Activated T-helper 1 cell treated with anti-CD3 and anti-CD28 coated beads, Interleukin-12 subunit alpha, Interleukin-12 subunit beta, Interleukin-2, Interleukin-4 antibody, amounts not matched to agents 30 ng/mL and 10 ng/mL and 1 ng/mL, durations not matched to agents 14 hours and 24 hours and 36 hours (primary cell): ENCODE measurements at regions of chr6 and their contacts with region 1.

Region 1: DNA sequence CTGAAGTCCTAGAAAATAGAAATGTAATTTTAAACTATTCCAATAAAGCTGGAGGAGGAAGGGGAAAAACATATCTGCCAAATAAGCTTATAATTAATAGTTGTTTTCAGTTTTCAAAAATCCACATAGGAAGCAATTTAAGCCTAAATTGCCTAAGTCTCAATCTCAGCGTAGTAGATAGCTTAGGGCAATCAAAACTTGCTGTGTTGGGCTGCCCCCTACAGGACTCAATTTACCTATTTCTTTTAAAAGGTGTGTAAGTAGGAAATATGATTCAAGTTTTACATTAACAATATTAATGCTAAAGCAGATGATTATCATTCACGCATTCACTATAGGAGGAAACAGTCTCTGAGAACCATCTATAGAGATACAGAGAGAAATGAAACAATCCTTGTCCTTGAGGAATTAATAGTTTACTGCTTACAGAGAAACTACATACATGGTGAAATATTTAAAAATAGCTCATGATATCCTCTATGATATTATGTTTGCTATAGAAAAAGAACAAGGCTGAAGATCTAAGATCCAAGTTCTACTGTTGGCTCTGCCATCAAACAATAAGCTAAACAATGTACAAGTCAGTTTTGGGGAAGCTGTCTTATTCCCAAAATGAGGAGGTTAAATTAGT is 102.1 kb downstream of the ATG5 start:
- DNase-seq: peak; percentile 54
- H3K4me3 Mint-ChIP-seq: no peak overlapping the region
- H3K27ac Mint-ChIP-seq: no peak overlapping the region
- H3K4me1 Mint-ChIP-seq: peaks cover 59% of the 10 kb centered on the region
- H3K27me3 Mint-ChIP-seq: no peaks in the 10 kb centered on the region

Region 2: GRCh38 chr6:105601541-105602236 is 621.7 kb before region 1 on chr6:
- intact Hi-C with region 1: loop called (anchors 5 kb)
- DNase-seq: peak; percentile 41
- H3K4me3 Mint-ChIP-seq: peak overlapping the region; percentile 64
- H3K27ac Mint-ChIP-seq: peak overlapping the region; percentile 89
- H3K4me1 Mint-ChIP-seq: peaks cover 37% of the 10 kb centered on the region
- H3K27me3 Mint-ChIP-seq: peaks cover 2% of the 10 kb centered on the region

Region 3: GRCh38 chr6:105793130-105793529 is 430.3 kb before region 1 on chr6:
- intact Hi-C with region 1: loop called (anchors 5 kb)
- DNase-seq: no peak
- H3K4me3 Mint-ChIP-seq: peak overlapping the region; percentile 5
- H3K27ac Mint-ChIP-seq: peak overlapping the region; percentile 66
- H3K4me1 Mint-ChIP-seq: peaks cover 86% of the 10 kb centered on the region
- H3K27me3 Mint-ChIP-seq: no peaks in the 10 kb centered on the region

Region 4: GRCh38 chr6:106085984-106086813 is 137.2 kb before region 1 on chr6 and contains the start of gene PRDM1:
- intact Hi-C with region 1: loop called (anchors 1 kb)
- DNase-seq: peak; percentile 83
- H3K4me3 Mint-ChIP-seq: peak within 1 kb of the TSS; percentile 96
- H3K27ac Mint-ChIP-seq: peak within 1 kb of the TSS; percentile 80
- H3K4me1 Mint-ChIP-seq: peaks cover 86% of the 10 kb centered on the region
- H3K27me3 Mint-ChIP-seq: peaks cover 7% of the 10 kb centered on the region
- total RNA-seq, gene PRDM1: 74.1 and 78.8 TPM in 2 replicates

Region 5: DNA sequence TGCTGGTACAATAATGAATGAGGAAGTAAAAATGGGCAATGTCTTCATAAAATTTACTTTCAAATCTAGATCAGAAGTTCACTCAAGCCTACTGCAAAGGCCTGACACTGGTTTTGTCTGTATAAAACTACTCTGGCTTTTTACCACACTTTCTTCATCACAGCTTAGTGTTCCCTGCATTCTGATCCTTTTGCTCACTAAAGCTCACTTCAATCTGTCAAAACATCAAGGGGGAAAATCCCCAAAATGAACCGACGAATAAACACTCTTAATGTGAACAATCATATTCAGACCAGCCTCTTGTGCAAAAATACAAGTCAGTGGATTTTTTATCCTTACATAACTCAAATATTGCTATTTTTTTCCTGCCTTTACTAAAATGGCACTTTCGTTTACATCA is 38.8 kb before region 1 on chr6:
- intact Hi-C with region 1: loop called (anchors 2 kb)
- DNase-seq: no peak
- H3K4me3 Mint-ChIP-seq: no peak overlapping the region
- H3K27ac Mint-ChIP-seq: no peak overlapping the region
- H3K4me1 Mint-ChIP-seq: peaks cover 70% of the 10 kb centered on the region
- H3K27me3 Mint-ChIP-seq: no peaks in the 10 kb centered on the region